PC-9 (cell line): ENCODE measurements at regions of chr7 and their contacts with region 1.

Region 1: DNA sequence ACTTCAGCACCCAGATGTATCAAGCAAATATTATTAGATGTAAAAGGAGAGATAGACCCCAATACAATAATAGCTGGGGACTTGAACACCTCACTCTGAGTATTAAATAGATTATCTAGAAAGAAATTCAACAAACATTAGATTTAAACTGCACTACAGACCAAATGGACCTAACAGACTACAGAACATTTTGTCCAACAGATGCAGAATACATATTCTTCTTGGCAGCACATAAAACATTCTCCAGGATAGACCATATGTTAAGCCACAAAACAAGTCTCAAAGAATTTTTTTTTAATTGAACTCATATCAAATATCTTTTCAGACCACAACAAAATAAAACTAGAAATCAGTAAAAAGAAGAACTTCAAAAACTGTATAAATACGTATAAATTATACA is 130.4 kb downstream of the MTERF1 start:
- DNase-seq: no peak
- H3K4me3 ChIP-seq: no peak overlapping the region
- H3K27ac ChIP-seq: no peak overlapping the region
- H3K4me1 ChIP-seq: no peaks in the 10 kb centered on the region
- H3K27me3 ChIP-seq: no peaks in the 10 kb centered on the region
- CTCF ChIP-seq: no peak

Region 2: DNA sequence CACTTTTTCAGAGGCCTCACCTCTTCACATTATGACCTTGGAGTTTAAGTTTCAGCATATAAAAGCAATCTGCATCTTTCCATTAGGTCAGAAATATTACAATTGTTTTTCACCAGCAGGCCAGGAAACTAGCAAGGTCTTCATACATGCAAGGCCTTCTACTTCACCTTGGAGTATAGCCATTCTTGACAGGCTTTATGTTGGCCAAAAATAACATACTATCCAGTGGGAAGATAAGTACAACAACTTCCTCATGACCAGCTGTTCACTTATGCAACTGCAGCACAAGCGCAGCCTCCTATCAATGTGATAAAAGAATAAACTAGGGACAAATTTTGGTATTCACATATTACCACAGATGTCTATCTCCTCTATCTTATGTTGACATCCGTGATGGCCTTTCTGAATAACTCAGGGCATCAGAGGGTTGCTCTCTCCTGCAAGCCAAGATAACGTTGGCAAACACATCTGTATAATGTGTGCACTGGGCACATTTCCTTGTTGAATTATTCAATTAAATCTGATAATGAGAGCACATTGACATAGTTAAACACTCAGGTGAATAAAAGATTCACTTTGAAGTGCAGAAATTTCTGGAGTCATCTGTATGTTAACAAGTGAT is 246.0 kb before region 1 on chr7:
- CTCF ChIA-PET with region 1: no interaction called
- POLR2A ChIA-PET with region 1: no interaction called
- intact Hi-C with region 1: no loop called
- DNase-seq: no peak
- H3K4me3 ChIP-seq: no peak overlapping the region
- H3K27ac ChIP-seq: no peak overlapping the region
- H3K4me1 ChIP-seq: no peaks in the 10 kb centered on the region
- H3K27me3 ChIP-seq: no peaks in the 10 kb centered on the region
- CTCF ChIP-seq: no peak

Region 3: DNA sequence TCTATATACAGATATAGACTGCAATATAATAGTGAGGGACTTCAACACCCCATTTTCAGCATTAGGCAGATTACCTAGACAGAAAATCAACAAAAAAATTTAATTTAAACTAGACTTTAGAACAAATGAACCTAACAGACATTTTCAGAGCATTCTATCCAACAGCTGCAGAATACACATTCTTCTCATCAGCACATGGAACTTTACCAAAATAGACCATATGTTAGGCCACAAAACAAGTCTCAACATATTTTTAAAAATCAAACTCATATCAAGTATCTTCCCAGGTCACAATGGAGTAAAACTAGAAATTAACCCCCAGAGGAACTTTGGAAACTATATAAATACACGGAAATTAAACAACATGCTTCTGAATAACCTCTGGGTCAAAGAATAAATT is 39.2 kb before region 1 on chr7:
- CTCF ChIA-PET with region 1: no interaction called
- POLR2A ChIA-PET with region 1: interaction called, 24 read pairs
- intact Hi-C with region 1: no loop called
- DNase-seq: no peak
- H3K4me3 ChIP-seq: no peak overlapping the region
- H3K27ac ChIP-seq: no peak overlapping the region
- H3K4me1 ChIP-seq: peaks cover 16% of the 10 kb centered on the region
- H3K27me3 ChIP-seq: no peaks in the 10 kb centered on the region
- CTCF ChIP-seq: no peak

Region 4: DNA sequence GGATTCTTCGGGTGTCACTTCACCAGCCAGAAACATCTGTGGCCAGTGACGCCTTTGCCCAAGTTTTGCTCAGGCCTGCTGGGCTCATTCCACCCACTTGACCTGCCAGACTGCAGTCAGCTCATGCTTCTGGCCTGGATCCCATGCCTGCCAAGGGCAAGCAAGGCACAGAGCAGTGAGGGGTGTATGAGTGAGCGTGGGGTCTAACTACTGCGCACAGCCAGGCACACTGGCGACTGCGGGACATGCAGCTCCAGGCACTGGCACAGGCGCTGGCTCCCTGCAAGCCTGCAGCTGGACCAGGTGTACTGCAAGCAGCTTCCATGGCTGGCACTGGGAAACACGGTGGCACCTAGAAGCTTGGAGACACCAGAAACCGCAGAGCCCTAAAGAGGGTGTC is 50.3 kb after region 1 on chr7:
- CTCF ChIA-PET with region 1: no interaction called
- POLR2A ChIA-PET with region 1: no interaction called
- intact Hi-C with region 1: no loop called
- DNase-seq: no peak
- H3K4me3 ChIP-seq: no peak overlapping the region
- H3K27ac ChIP-seq: no peak overlapping the region
- H3K4me1 ChIP-seq: no peaks in the 10 kb centered on the region
- H3K27me3 ChIP-seq: no peaks in the 10 kb centered on the region
- CTCF ChIP-seq: no peak